A673 (cell line): ENCODE measurements at regions of chr4 and their contacts with region 1.

Region 1: DNA sequence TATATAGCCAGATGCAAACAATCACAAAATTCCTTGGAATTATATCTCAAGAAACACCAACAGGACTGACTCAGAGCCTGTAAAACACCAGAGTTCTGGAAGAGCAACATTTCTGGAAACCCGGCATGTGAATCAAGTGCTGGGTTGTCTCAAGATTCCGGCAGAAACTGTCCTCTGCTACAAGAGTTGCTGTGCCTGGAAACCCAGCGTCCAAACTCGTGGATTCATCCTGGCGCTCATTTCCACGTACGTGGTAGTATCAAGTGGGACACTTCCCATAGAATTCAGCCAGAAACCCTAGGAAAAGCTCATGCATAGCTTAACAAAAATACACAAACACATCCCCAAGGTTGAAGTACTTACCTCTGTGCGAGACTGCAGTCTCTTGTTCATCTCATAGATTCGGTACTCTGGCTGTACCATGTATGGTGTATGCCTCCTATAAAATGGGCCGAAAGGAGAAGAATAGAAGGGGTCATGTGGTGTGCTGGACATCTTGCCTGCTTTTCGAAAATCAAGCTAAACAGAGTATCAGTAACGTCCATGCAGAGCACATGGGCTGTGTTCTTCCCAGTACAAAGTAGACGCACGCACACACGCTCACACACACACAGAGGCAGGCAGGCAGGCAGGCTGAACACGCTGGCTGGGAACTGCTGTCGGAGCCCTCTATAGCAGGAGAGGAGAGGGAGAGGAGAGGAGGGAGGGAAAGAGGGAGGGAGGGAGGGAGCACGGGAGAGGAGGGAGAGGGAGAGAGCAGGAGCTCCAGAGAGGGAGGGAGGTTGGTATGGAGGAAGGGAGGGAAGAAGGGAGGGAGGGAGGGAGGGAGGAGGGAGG is at the start of gene LDB2:
- DNase-seq: peak; percentile 94
- H3K4me3 ChIP-seq: peak within 1 kb of the TSS; percentile 71
- H3K27ac ChIP-seq: peak within 1 kb of the TSS; percentile 88
- H3K4me1 ChIP-seq: peaks cover 38% of the 10 kb centered on the region
- H3K27me3 ChIP-seq: no peaks in the 10 kb centered on the region
- CTCF ChIP-seq: no peak
- total RNA-seq, gene LDB2: 45.1 and 47.4 TPM in 2 replicates

Region 2: DNA sequence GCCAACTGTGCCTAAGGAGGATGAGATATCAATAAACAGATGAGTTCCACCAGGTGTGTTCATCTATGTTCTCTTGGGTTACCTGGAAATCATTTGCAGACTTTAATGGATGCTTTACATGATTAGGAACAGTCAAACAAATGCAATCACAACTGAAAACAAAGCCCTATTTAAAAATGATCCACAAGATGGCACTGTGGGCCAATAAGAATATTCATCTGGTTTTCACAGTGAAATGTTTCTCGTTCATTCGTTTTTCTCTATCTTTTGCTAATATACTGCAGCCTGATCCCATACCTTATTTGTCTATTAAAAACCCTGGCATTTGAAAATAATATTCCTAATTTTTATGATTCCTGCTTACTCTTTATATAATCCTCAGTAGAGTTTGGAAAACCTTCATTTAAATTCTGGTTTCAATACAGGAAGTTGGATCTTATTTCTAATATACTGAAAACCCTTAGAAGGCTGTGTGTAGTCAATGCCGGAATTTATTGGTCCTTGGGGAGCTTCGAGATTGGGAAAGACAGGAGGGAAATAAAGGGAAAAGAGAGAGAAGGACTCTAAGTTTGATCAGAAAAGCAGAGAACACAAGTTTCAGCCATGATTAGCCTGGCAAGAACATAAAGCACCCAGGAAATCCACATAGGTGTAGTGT is 608.2 kb before region 1 on chr4:
- CTCF ChIA-PET with region 1: no interaction called
- POLR2A ChIA-PET with region 1: no interaction called
- intact Hi-C with region 1: no loop called
- DNase-seq: peak; percentile 86
- H3K4me3 ChIP-seq: peak overlapping the region; percentile 18
- H3K27ac ChIP-seq: peak overlapping the region; percentile 56
- H3K4me1 ChIP-seq: peaks cover 23% of the 10 kb centered on the region
- H3K27me3 ChIP-seq: no peaks in the 10 kb centered on the region
- CTCF ChIP-seq: peak; percentile 71

Region 3: GRCh38 chr4:16686195-16686594 is 212.0 kb before region 1 on chr4:
- CTCF ChIA-PET with region 1: no interaction called
- POLR2A ChIA-PET with region 1: no interaction called
- intact Hi-C with region 1: loop called (anchors 10 kb)
- DNase-seq: peak; percentile 81
- H3K4me3 ChIP-seq: no peak overlapping the region
- H3K27ac ChIP-seq: peak overlapping the region; percentile 59
- H3K4me1 ChIP-seq: peaks cover 93% of the 10 kb centered on the region
- H3K27me3 ChIP-seq: no peaks in the 10 kb centered on the region
- CTCF ChIP-seq: no peak

Region 4: GRCh38 chr4:16794816-16795445 is 103.3 kb before region 1 on chr4:
- CTCF ChIA-PET with region 1: interaction called, 3 read pairs
- POLR2A ChIA-PET with region 1: no interaction called
- intact Hi-C with region 1: loop called (anchors 5 kb)
- DNase-seq: peak; percentile 89
- H3K4me3 ChIP-seq: no peak overlapping the region
- H3K27ac ChIP-seq: no peak overlapping the region
- H3K4me1 ChIP-seq: peaks cover 6% of the 10 kb centered on the region
- H3K27me3 ChIP-seq: no peaks in the 10 kb centered on the region
- CTCF ChIP-seq: peak; percentile 98

Region 5: GRCh38 chr4:16869575-16870245 is 28.5 kb before region 1 on chr4:
- CTCF ChIA-PET with region 1: interaction called, 10 read pairs
- POLR2A ChIA-PET with region 1: no interaction called
- intact Hi-C with region 1: no loop called
- DNase-seq: no peak
- H3K4me3 ChIP-seq: no peak overlapping the region
- H3K27ac ChIP-seq: no peak overlapping the region
- H3K4me1 ChIP-seq: peaks cover 6% of the 10 kb centered on the region
- H3K27me3 ChIP-seq: no peaks in the 10 kb centered on the region
- CTCF ChIP-seq: no peak

Region 6: DNA sequence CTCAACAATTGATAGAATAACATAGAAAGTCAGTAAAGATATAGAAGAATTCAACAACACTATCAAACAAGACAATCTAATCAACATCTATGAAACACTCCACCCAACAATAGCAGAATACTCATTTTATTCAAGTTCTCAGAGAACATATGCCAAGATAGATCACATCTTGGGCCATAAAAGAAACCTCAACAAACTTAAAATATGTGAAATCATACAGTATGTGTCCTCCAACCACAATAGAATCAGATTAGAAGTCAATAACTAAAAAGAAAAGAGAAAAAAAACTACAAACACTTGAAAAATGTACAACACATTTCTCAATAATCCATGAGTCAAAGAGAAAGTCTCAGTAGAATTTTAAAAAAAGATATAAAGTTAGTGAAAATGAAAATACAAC is 78.9 kb after region 1 on chr4:
- CTCF ChIA-PET with region 1: no interaction called
- POLR2A ChIA-PET with region 1: interaction called, 10 read pairs
- intact Hi-C with region 1: no loop called
- DNase-seq: no peak
- H3K4me3 ChIP-seq: no peak overlapping the region
- H3K27ac ChIP-seq: no peak overlapping the region
- H3K4me1 ChIP-seq: no peaks in the 10 kb centered on the region
- H3K27me3 ChIP-seq: no peaks in the 10 kb centered on the region
- CTCF ChIP-seq: no peak

Region 7: GRCh38 chr4:17260166-17260907 is 362.1 kb after region 1 on chr4:
- CTCF ChIA-PET with region 1: no interaction called
- POLR2A ChIA-PET with region 1: no interaction called
- intact Hi-C with region 1: no loop called
- DNase-seq: no peak
- H3K4me3 ChIP-seq: no peak overlapping the region
- H3K27ac ChIP-seq: no peak overlapping the region
- H3K4me1 ChIP-seq: no peaks in the 10 kb centered on the region
- H3K27me3 ChIP-seq: no peaks in the 10 kb centered on the region
- CTCF ChIP-seq: no peak